Activated CD8-positive, alpha-beta T cell treated with anti-CD3 and anti-CD28 coated beads, Interleukin-2, amount 10 ng/mL, durations not matched to agents 7 days and 5 days (primary cell): ENCODE measurements at regions of chr16 and their contacts with region 1.

Region 1: DNA sequence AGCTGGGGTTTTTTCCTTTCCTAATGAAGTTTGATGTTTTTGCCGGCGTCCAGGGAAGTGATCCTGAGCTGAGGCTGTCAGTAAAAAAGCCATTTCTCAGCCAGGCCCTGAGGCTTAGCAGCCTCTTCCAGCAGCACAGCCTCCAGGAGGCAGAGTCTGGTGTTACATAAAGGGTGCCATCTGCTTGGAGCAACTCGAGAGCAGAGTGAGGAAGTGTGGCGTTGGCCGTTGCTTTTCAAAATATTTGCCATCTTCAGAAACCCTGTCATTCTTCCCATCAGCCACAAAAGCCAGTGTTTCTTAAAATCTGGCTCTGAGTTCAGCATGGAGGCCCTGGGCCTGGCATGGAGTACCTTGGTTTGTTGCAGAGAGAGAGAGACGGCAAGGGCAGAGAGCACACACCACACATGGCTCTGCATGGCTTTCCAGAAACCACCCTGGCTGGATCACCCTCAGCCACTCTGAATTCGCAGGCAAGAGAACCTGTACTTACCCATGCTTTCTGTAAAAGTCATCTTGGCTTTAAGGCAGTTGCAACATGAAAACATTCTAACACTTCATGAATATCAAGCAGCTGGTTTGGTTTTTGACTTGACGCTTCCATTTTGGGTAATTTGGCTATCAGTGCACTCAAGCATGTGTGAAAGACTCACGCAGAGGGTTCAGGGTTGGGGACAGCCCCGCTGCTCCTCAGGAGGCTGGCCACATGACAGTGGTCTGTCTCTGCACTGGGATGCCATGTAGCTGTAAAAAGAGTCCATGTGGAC is 21.0 kb downstream of the PMM2 start:
- DNase-seq: no peak
- ATAC-seq: no peak
- H3K4me3 Mint-ChIP-seq: no peak overlapping the region
- H3K27ac Mint-ChIP-seq: peak overlapping the region; percentile 81
- H3K4me1 Mint-ChIP-seq: peaks cover 26% of the 10 kb centered on the region
- H3K27me3 Mint-ChIP-seq: no peaks in the 10 kb centered on the region

Region 2: GRCh38 chr16:8797364-8798173 is 21.1 kb before region 1 on chr16 and contains the starts of genes PMM2 and TMEM186:
- CTCF ChIA-PET with region 1: interaction called, 6 read pairs
- POLR2A ChIA-PET with region 1: interaction called, 13 read pairs
- DNase-seq: peak; percentile 98
- ATAC-seq: peak; percentile 95
- H3K4me3 Mint-ChIP-seq: peak within 1 kb of the TSS; percentile 99
- H3K27ac Mint-ChIP-seq: peak within 1 kb of the TSS; percentile 95
- H3K4me1 Mint-ChIP-seq: peaks cover 36% of the 10 kb centered on the region
- H3K27me3 Mint-ChIP-seq: no peaks in the 10 kb centered on the region
- total RNA-seq, gene PMM2: 36.9 to 37.6 TPM
- total RNA-seq, gene TMEM186: 11.0 to 11.1 TPM

Region 3: DNA sequence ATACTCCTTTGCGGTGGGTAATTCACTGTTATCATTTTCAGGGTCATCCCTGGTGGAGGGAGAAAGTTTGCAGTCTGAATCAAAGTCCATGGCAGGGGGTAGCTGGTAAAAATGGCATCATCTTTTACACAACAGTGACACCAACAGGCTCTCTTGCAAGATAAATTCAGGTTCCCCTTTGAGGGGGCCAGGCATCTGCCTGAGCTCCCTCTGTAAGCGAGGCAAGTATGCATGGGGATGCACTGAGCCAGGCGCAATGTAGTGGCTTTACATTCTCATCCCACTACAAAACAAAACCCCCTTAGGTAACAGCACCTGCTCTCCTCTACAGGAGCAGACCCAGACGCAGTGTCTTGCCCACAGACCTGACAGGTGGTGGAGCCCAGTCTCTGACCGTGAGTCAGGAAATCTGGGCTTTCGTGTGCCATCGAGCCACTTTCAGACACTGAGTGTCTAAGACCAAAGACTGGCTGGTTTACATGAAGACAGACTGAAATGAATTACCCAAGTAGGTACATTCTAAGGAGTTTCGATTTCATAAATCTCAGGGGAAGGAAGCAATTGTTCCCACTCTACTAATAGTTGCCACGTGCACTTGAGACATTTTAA is 81.1 kb after region 1 on chr16:
- CTCF ChIA-PET with region 1: no interaction called
- POLR2A ChIA-PET with region 1: no interaction called
- DNase-seq: no peak
- ATAC-seq: no peak
- H3K4me3 Mint-ChIP-seq: no peak overlapping the region
- H3K27ac Mint-ChIP-seq: no peak overlapping the region
- H3K4me1 Mint-ChIP-seq: no peaks in the 10 kb centered on the region
- H3K27me3 Mint-ChIP-seq: no peaks in the 10 kb centered on the region

Region 4: DNA sequence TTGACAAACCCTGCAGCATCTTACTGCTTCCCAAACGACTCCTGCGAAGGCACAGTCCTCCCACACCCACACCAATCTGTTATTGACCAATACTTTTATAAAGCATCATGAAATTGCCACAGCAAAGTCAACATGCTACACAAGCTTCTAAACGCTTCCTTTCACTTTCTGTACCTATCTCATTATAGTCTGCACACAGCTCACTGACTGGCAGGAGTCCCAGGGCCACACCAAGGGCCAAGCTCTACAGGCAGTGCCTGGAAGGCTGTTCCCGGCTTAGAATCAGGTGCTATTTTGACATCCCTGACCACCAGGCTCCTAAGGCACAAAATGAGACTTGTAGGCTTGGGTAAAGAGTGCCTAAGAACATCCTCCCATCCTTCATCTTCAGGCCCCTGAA is 105.5 kb after region 1 on chr16:
- CTCF ChIA-PET with region 1: no interaction called
- POLR2A ChIA-PET with region 1: no interaction called
- DNase-seq: no peak
- ATAC-seq: peak; percentile 47
- H3K4me3 Mint-ChIP-seq: no peak overlapping the region
- H3K27ac Mint-ChIP-seq: peak overlapping the region; percentile 47
- H3K4me1 Mint-ChIP-seq: peaks cover 44% of the 10 kb centered on the region
- H3K27me3 Mint-ChIP-seq: no peaks in the 10 kb centered on the region